ENCODE measurements at regions of chr6 and their contacts with region 1.

Region 1: DNA sequence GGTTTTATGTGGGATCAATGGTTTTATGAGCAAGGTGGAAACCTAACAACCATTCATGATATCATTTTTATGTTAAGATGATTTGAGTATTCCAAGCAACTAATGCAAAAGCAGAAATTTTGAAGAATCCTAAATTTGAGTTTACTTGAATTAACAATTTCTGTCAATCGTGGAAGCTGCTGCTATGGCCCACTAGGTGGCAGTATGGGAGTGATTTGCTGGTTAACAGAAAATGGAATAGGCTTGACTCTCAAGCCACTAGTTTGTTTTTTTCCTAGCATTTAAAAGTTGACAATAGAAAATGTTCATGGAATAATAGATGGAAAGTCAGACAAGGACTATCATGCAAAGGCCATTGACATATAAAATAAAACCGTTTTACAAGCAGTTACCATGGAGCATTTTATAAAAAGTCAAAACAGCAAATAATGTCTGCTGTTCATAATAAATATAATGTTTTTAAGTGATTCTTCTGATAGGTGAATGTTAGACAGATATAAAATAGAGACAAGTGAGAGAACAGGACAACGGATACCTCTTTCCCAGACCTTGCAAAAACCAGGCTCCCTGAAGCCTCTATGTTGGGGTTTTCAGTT is 43.0 kb upstream of the TMEM200A start:
- DNase-seq: peak in 1 of 5 donors; percentile 13
- ATAC-seq: no peak
- H3K4me3 ChIP-seq: no peak overlapping the region
- H3K27ac ChIP-seq: no peak overlapping the region
- H3K4me1 ChIP-seq: no peaks in the 10 kb centered on the region
- H3K27me3 ChIP-seq: peaks cover 0 to 2% (median 0%) of the 10 kb centered on the region in 9 donors
- CTCF ChIP-seq: peak; percentile 71 to 91 (median 82)
- POLR2A ChIP-seq: no peak

Region 2: GRCh38 chr6:130409418-130410100 is 86.8 kb after region 1 on chr6:
- intact Hi-C with region 1: no loop called
- DNase-seq: no peak
- ATAC-seq: no peak
- H3K4me3 ChIP-seq: no peak overlapping the region
- H3K27ac ChIP-seq: no peak overlapping the region
- H3K4me1 ChIP-seq: no peaks in the 10 kb centered on the region
- H3K27me3 ChIP-seq: peaks cover 0 to 5% (median 0%) of the 10 kb centered on the region in 9 donors
- CTCF ChIP-seq: no peak
- POLR2A ChIP-seq: no peak

Region 3: DNA sequence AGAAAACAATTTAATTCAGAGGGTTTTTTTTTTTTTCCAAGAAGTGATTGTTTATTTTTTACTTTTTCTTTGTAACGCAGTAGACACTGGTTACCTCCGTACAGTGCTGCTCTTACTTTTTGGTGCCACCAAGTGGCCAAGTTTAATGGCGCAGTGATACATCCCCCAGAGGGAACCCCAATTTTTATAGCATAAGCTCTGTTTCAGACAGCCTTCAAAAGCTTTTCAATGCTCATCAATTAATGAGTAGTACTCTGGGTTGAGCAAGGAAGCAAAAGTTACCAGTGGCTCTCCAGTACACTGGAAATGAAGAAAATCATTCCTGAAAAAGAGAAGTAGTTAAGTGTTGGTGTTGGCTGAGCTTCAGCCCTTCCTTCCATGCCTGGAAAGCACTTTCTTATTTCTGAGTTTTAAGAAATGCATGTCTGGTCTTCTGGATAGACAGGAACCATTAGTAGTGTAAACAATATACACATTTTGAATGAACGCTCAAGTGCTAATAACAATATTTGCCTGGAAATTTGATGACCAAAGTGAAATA is 375.3 kb after region 1 on chr6:
- intact Hi-C with region 1: loop called in 3 of 10 experiments (anchors 2 to 10 kb)
- DNase-seq: peak in 2 of 5 donors; percentile 19 to 26
- ATAC-seq: no peak
- H3K4me3 ChIP-seq: no peak overlapping the region
- H3K27ac ChIP-seq: no peak overlapping the region
- H3K4me1 ChIP-seq: peaks cover 0 to 5% (median 0%) of the 10 kb centered on the region in 12 donors
- H3K27me3 ChIP-seq: no peaks in the 10 kb centered on the region
- CTCF ChIP-seq: peak; percentile 20 to 67 (median 52)
- POLR2A ChIP-seq: no peak

Region 4: GRCh38 chr6:130843575-130844320 is 521.0 kb after region 1 on chr6:
- intact Hi-C with region 1: loop called in 6 of 10 experiments (anchors 10 kb)
- DNase-seq: no peak
- ATAC-seq: no peak
- H3K4me3 ChIP-seq: no peak overlapping the region
- H3K27ac ChIP-seq: no peak overlapping the region
- H3K4me1 ChIP-seq: peaks cover 0 to 38% (median 4%) of the 10 kb centered on the region in 12 donors
- H3K27me3 ChIP-seq: no peaks in the 10 kb centered on the region
- CTCF ChIP-seq: peak in 9 of 12 donors; percentile 15 to 55 (median 40)
- POLR2A ChIP-seq: no peak

Region 5: GRCh38 chr6:130872250-130873095 is 549.7 kb after region 1 on chr6:
- intact Hi-C with region 1: loop called in 9 of 10 experiments (anchors 1 to 10 kb)
- DNase-seq: peak; percentile 44 to 75 (median 60)
- ATAC-seq: peak in 1 of 4 donors; percentile 54
- H3K4me3 ChIP-seq: no peak overlapping the region
- H3K27ac ChIP-seq: no peak overlapping the region
- H3K4me1 ChIP-seq: peaks cover 0 to 9% (median 0%) of the 10 kb centered on the region in 12 donors
- H3K27me3 ChIP-seq: no peaks in the 10 kb centered on the region
- CTCF ChIP-seq: peak; percentile 73 to 96 (median 84)
- POLR2A ChIP-seq: no peak